HEK293T (cell line): ENCODE measurements at regions of chr1 and their contacts with region 1.

Region 1: DNA sequence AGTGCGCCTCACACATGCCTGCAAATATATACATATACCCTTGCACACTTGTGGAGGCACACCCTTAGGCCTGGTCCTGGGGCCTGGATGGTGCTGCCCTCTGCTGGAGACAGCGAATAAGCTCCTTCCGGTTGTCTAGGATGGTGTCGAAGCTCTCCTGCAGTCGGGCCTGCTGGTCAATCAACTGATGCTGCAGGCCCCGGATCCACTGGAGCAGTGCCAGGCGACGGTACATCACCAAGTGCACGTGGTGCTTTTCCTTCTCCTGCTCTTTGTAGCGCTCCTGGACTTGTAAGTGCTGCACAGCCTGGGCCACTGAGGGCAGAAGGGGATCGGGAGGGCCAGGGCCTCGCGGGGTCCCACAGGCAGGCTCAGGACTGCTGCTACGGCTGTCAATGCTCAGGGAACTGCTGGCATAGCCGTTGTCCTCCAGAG is 3.1 kb downstream of the C1orf216 start:
- DNase-seq: peak; percentile 85

Region 2: DNA sequence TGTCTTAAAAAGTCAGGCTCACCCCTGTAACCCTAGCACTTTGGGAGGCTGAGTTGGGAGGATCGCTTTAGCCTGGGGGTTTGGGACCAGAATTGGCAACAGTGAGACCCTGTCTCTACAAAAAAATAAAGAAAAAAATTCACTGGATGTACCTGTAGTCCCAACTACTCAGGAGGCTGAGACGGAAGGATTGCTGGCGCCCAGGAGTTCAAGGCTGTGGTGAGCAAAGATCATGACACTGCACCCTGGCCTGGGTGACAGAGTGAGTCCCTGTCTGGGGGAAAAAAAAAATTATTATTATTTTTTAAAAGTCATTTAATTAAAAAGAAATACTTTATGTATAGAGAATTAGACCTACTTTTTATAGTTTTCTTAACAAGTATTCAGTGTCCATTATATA is 399.9 kb before region 1 on chr1:
- CTCF ChIA-PET with region 1: no interaction called
- POLR2A ChIA-PET with region 1: no interaction called
- DNase-seq: no peak

Region 3: GRCh38 chr1:35564037-35564883 is 151.3 kb before region 1 on chr1:
- CTCF ChIA-PET with region 1: interaction called, 32 read pairs
- POLR2A ChIA-PET with region 1: interaction called, 5 read pairs
- DNase-seq: peak; percentile 73

Region 4: DNA sequence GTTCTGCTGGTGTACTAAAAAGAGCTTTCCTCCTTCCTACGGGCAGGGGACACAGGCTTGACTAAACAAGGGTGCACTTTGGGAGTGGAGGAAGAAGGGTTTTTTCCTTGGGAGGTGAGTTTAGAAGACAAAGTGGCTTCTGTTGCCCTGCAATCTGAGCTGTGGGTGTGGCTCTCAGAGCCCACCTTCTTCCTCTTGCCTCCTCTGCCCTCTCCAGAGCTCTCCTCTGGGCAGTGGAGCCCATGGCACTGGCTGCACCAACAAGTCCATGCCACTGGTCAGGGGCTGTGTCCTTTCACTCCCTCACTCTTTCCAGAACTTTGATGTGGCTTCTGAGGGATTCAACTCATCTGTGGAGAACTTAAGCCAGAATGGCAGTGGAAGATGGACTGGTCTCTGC is 48.7 kb before region 1 on chr1:
- CTCF ChIA-PET with region 1: no interaction called
- POLR2A ChIA-PET with region 1: no interaction called
- DNase-seq: no peak

Region 5: GRCh38 chr1:35726450-35727433 is 11.2 kb after region 1 on chr1:
- CTCF ChIA-PET with region 1: interaction called, 29 read pairs
- POLR2A ChIA-PET with region 1: no interaction called
- DNase-seq: peak; percentile 81

Region 6: GRCh38 chr1:35753626-35754260 is 38.2 kb after region 1 on chr1:
- CTCF ChIA-PET with region 1: no interaction called
- POLR2A ChIA-PET with region 1: no interaction called
- DNase-seq: no peak